ENCODE measurements at regions of chr6 and their contacts with region 1.

Region 1: GRCh38 chr6:33771146-33772081 is 17.5 kb downstream of the LEMD2 start:
- DNase-seq: peak; percentile 64 to 77 (median 68)
- ATAC-seq: peak; percentile 76
- H3K4me3 ChIP-seq: no peak overlapping the region
- H3K27ac ChIP-seq: peak overlapping the region; percentile 8 to 53 (median 40)
- H3K4me1 ChIP-seq: peaks cover 28% of the 10 kb centered on the region
- H3K27me3 ChIP-seq: no peaks in the 10 kb centered on the region
- CTCF ChIP-seq: peak; percentile 68 to 98 (median 91)
- POLR2A ChIP-seq: no peak

Region 2: DNA sequence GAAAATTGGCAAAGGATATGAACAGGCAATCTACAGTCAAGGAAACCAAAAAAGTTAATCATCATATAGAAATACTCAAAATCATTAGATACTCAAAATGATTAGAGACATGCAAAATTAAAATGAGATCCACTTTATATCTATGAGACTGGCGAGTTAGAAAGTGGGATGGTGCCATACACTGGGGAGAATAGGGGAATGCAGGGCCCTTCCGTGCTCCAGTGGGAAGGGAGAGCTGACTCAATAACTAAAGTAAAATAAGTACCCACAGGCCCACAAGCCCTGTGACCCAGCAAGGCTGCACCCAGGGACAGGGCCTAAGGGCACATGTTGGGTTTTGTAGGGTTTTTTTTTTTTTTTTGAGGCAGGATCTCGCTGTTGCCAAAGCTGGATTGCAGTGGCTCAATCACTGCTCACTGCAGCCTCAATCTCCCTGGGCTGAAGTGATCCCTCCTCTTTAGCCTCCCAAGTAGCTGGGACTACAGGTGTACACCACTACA is 236.3 kb before region 1 on chr6:
- intact Hi-C with region 1: no loop called
- DNase-seq: no peak
- ATAC-seq: no peak
- H3K4me3 ChIP-seq: no peak overlapping the region
- H3K27ac ChIP-seq: no peak overlapping the region
- H3K4me1 ChIP-seq: no peaks in the 10 kb centered on the region
- H3K27me3 ChIP-seq: no peaks in the 10 kb centered on the region
- CTCF ChIP-seq: no peak
- POLR2A ChIP-seq: no peak

Region 3: GRCh38 chr6:33579828-33580714 is 191.3 kb before region 1 on chr6 and contains the start of gene BAK1:
- intact Hi-C with region 1: loop called (anchors 10 kb)
- DNase-seq: peak; percentile 82 to 93 (median 92)
- ATAC-seq: peak; percentile 93
- H3K4me3 ChIP-seq: peak within 1 kb of the TSS; percentile 54 to 90
- H3K27ac ChIP-seq: peak within 1 kb of the TSS; percentile 62 to 83 (median 81)
- H3K4me1 ChIP-seq: peaks cover 32% of the 10 kb centered on the region
- H3K27me3 ChIP-seq: no peaks in the 10 kb centered on the region
- CTCF ChIP-seq: peak; percentile 23 to 66 (median 52)
- POLR2A ChIP-seq: peak; percentile 52 to 84 (median 80)
- total RNA-seq, gene BAK1: 2.3 to 5.7 TPM

Region 4: GRCh38 chr6:33709605-33710295 is 61.7 kb before region 1 on chr6:
- intact Hi-C with region 1: loop called (anchors 5 kb)
- DNase-seq: no peak
- ATAC-seq: no peak
- H3K4me3 ChIP-seq: no peak overlapping the region
- H3K27ac ChIP-seq: no peak overlapping the region
- H3K4me1 ChIP-seq: peaks cover 22% of the 10 kb centered on the region
- H3K27me3 ChIP-seq: no peaks in the 10 kb centered on the region
- CTCF ChIP-seq: no peak
- POLR2A ChIP-seq: no peak

Region 5: GRCh38 chr6:34027445-34027936 is 256.1 kb after region 1 on chr6:
- intact Hi-C with region 1: loop called (anchors 5 kb)
- DNase-seq: peak; percentile 34 to 54 (median 45)
- ATAC-seq: peak; percentile 25
- H3K4me3 ChIP-seq: no peak overlapping the region
- H3K27ac ChIP-seq: no peak overlapping the region
- H3K4me1 ChIP-seq: no peaks in the 10 kb centered on the region
- H3K27me3 ChIP-seq: no peaks in the 10 kb centered on the region
- CTCF ChIP-seq: peak; percentile 44 to 67 (median 59)
- POLR2A ChIP-seq: no peak

Region 6: GRCh38 chr6:34154668-34155447 is 383.4 kb after region 1 on chr6:
- intact Hi-C with region 1: loop called (anchors 5 kb)
- DNase-seq: peak; percentile 28 to 57 (median 48)
- ATAC-seq: peak; percentile 62
- H3K4me3 ChIP-seq: no peak overlapping the region
- H3K27ac ChIP-seq: no peak overlapping the region
- H3K4me1 ChIP-seq: peaks cover 9% of the 10 kb centered on the region
- H3K27me3 ChIP-seq: peaks cover 0 to 11% of the 10 kb centered on the region in 2 donors
- CTCF ChIP-seq: peak; percentile 83 to 97 (median 91)
- POLR2A ChIP-seq: no peak